HCT116 (cell line): ENCODE measurements at regions of chr2 and their contacts with region 1.

Region 1: DNA sequence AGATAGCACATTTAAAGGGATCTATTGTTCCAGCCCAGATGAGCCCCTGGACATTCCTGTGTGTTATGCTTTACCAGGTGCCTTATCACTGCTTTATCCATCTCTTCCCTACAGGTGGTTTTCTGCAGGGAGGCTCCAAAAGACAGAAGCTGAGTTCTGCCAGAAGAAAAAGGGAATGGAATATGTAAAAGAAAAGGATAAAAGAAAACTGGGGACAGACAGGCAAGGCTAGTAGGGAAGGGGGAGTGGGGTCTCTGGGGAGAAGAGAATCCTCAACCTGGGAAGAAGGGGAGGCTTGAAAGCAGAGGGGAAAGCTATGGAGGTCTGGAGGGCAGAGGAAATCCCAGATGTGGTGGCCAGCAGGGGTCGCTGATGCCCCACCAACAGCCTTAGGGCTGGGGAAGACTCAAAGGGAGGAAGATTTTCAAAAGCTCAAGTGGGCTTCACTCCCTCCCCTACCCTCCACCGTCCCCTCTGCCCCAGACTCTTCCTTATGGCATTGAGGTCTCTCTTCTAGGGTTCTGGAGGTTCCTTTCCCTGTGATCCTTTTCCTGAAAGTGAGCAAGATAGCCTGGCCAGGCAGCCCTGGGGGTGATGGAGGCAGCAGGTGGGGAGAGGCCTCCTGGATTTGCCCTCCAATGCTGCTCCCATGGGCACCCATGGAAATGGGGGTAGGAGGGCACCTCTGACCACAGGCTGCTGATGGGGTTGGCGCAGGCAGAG is 178.1 kb upstream of the PKDCC start:
- DNase-seq: peak; percentile 34
- ATAC-seq: peak; percentile 95
- H3K4me3 ChIP-seq: no peak overlapping the region
- H3K27ac ChIP-seq: no peak overlapping the region
- H3K4me1 ChIP-seq: no peaks in the 10 kb centered on the region
- H3K27me3 ChIP-seq: no peaks in the 10 kb centered on the region; the same call in 1 of the 2 replicates
- CTCF ChIP-seq: peak; percentile 76 to 86 (median 80)
- POLR2A ChIP-seq: no peak
- RAD21 ChIP-seq: peak; percentile 96

Region 2: DNA sequence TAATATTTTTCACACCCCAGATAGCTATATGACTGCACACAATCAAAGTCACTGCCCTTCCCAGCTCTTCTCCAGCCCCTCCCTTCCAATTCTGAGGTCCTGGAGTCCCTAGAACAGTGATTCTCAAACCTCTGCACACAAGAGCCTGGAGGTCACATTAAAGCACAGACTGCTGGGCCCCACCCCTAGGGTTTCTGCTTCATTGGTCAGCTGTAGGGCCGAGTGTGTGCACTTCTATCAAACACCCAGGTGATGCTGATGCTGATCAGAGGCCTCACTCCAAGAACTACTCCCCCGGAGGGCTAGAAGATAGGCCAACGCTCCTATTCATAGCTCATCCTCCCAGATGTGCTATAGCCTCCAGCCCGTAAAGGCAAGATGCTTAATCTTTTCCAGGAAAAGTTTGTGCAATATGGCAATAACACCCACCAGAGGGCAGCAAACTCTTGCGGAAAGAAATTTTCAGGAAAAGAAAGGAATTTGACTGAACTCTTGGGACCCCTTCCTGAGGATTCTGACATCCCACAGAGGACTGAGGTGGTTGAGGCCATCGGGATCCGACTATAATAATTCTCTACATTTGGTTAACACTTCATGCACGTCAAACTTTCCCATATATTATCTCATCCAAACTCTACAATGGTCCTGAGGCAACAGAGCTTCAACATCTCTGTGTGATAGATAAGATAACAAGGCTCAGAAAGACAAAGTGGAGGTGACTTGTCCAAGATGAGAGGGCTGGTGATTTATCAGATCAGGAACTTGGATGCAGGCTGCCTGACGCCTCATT is 16.1 kb before region 1 on chr2:
- CTCF ChIA-PET with region 1: interaction called, 16 read pairs
- POLR2A ChIA-PET with region 1: no interaction called
- RAD21 ChIA-PET with region 1: interaction called, 3 to 7 read pairs
- intact Hi-C with region 1: loop called (anchors 1 kb)
- DNase-seq: peak; percentile 35
- ATAC-seq: peak; percentile 82
- H3K4me3 ChIP-seq: no peak overlapping the region
- H3K27ac ChIP-seq: no peak overlapping the region
- H3K4me1 ChIP-seq: no peaks in the 10 kb centered on the region
- H3K27me3 ChIP-seq: peaks cover 12% of the 10 kb centered on the region
- CTCF ChIP-seq: peak; percentile 67 to 91 (median 80)
- POLR2A ChIP-seq: no peak
- RAD21 ChIP-seq: peak; percentile 94

Region 3: GRCh38 chr2:42040643-42041278 is 171.1 kb after region 1 on chr2:
- CTCF ChIA-PET with region 1: interaction called, 10 read pairs
- POLR2A ChIA-PET with region 1: no interaction called
- RAD21 ChIA-PET with region 1: no interaction called
- intact Hi-C with region 1: no loop called
- DNase-seq: no peak
- ATAC-seq: no peak
- H3K4me3 ChIP-seq: no peak overlapping the region
- H3K27ac ChIP-seq: no peak overlapping the region
- H3K4me1 ChIP-seq: no peaks in the 10 kb centered on the region
- H3K27me3 ChIP-seq: 0 out of 2 replicates have a peak, but pooled peaks cover 5% of the 10 kb centered on the region
- CTCF ChIP-seq: peak; percentile 18 to 36 (median 21); a peak in 4 of 6 replicates
- POLR2A ChIP-seq: no peak
- RAD21 ChIP-seq: peak; percentile 21; the same call in 1 of the 2 replicates

Region 4: GRCh38 chr2:42053791-42054701 is 184.3 kb after region 1 on chr2:
- CTCF ChIA-PET with region 1: interaction called, 31 read pairs
- POLR2A ChIA-PET with region 1: no interaction called
- RAD21 ChIA-PET with region 1: no interaction called
- intact Hi-C with region 1: no loop called
- DNase-seq: no peak
- ATAC-seq: 0 out of 2 replicates have a peak, but pooled peaks have one; percentile 4
- H3K4me3 ChIP-seq: no peak overlapping the region
- H3K27ac ChIP-seq: no peak overlapping the region
- H3K4me1 ChIP-seq: peaks cover 0 to 19% of the 10 kb centered on the region in 2 experiments; a peak in 1 of 4 replicates
- H3K27me3 ChIP-seq: no peaks in the 10 kb centered on the region
- CTCF ChIP-seq: no peak
- POLR2A ChIP-seq: no peak
- RAD21 ChIP-seq: no peak

Region 5: GRCh38 chr2:42086500-42086953 is 216.8 kb after region 1 on chr2:
- CTCF ChIA-PET with region 1: interaction called, 158 read pairs
- POLR2A ChIA-PET with region 1: no interaction called
- RAD21 ChIA-PET with region 1: interaction called, 11 to 12 read pairs
- intact Hi-C with region 1: loop called (anchors 1 kb)
- DNase-seq: peak; percentile 35
- ATAC-seq: peak; percentile 77
- H3K4me3 ChIP-seq: no peak overlapping the region
- H3K27ac ChIP-seq: no peak overlapping the region
- H3K4me1 ChIP-seq: no peaks in the 10 kb centered on the region
- H3K27me3 ChIP-seq: peaks cover 4% of the 10 kb centered on the region; the same call in 1 of the 2 replicates
- CTCF ChIP-seq: peak; percentile 44 to 80 (median 73)
- POLR2A ChIP-seq: no peak
- RAD21 ChIP-seq: peak; percentile 93

Region 6: GRCh38 chr2:42238644-42239288 is 369.1 kb after region 1 on chr2:
- CTCF ChIA-PET with region 1: no interaction called
- POLR2A ChIA-PET with region 1: no interaction called
- RAD21 ChIA-PET with region 1: no interaction called
- intact Hi-C with region 1: loop called (anchors 5 kb)
- DNase-seq: peak; percentile 6
- ATAC-seq: peak; percentile 93
- H3K4me3 ChIP-seq: no peak overlapping the region
- H3K27ac ChIP-seq: no peak overlapping the region
- H3K4me1 ChIP-seq: no peaks in the 10 kb centered on the region
- H3K27me3 ChIP-seq: no peaks in the 10 kb centered on the region
- CTCF ChIP-seq: peak; percentile 32 to 53 (median 51); a peak in 5 of 6 replicates
- POLR2A ChIP-seq: no peak
- RAD21 ChIP-seq: peak; percentile 76

Region 7: GRCh38 chr2:42663106-42663780 is 793.5 kb after region 1 on chr2:
- CTCF ChIA-PET with region 1: no interaction called
- POLR2A ChIA-PET with region 1: no interaction called
- RAD21 ChIA-PET with region 1: no interaction called
- intact Hi-C with region 1: loop called (anchors 10 kb)
- DNase-seq: peak; percentile 46
- ATAC-seq: peak; percentile 97
- H3K4me3 ChIP-seq: no peak overlapping the region
- H3K27ac ChIP-seq: no peak overlapping the region
- H3K4me1 ChIP-seq: no peaks in the 10 kb centered on the region
- H3K27me3 ChIP-seq: no peaks in the 10 kb centered on the region
- CTCF ChIP-seq: peak; percentile 90 to 99 (median 98)
- POLR2A ChIP-seq: no peak
- RAD21 ChIP-seq: peak; percentile 92